ENCODE measurements at regions of chr17 and their contacts with region 1.

Region 1: DNA sequence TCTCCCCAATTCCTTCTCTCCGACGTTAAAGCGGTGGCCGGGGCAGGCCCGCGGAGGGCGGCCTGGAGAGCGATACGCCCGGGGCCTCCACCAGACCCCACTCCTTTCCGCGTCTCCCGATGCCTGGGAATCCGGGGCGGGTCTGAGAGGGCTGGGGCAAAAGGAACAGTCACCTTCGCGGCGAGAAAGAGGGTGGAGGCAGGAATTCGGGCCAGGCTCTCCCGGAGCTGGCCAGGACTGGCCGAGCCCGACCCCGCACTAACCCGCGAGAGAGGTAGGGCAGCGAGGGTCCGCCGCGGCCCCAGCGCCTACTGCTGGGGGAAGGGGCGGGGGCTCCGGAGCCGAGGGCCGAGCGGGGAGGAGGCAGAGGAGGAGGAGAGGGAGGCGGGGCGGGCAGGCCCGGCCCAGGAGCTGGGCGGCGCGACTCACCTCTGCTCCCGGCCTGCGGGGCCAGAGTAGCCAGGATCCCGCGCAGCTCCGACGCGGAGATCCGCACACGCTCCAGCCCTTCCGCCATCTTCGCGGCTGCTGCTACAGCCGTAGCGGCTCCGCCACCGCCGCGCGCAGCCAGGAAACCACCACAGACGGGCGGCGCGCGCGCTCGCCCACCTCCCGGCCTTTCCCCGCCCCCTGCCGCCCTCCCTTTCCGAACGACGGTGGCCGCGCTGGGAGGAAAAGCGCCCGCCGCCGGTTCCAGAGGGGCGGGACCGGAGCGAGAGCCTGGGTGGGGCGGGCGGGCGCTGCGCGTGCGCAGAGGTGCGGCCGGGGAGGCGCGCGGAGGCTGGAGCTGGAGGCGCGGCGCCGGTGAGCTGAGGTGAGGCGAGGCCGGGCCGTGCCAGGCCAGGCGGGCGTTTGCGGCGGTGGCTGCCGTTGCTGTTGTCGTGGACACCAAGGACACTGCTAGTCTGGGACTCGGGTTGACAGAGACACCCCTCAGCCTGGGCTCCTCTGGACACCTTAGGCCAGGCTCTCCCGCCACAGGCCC is at the starts of genes SMG6 and SRR:
- DNase-seq: peak; percentile 95
- H3K4me3 Mint-ChIP-seq: peak within 1 kb of the TSS; percentile 91
- H3K27ac Mint-ChIP-seq: peak within 1 kb of the TSS; percentile 70
- H3K4me1 Mint-ChIP-seq: peaks cover 45% of the 10 kb centered on the region
- H3K27me3 Mint-ChIP-seq: no peaks in the 10 kb centered on the region
- total RNA-seq, gene SMG6: 18.8 to 20.7 TPM
- total RNA-seq, gene SRR: 8.9 to 10.2 TPM

Region 2: DNA sequence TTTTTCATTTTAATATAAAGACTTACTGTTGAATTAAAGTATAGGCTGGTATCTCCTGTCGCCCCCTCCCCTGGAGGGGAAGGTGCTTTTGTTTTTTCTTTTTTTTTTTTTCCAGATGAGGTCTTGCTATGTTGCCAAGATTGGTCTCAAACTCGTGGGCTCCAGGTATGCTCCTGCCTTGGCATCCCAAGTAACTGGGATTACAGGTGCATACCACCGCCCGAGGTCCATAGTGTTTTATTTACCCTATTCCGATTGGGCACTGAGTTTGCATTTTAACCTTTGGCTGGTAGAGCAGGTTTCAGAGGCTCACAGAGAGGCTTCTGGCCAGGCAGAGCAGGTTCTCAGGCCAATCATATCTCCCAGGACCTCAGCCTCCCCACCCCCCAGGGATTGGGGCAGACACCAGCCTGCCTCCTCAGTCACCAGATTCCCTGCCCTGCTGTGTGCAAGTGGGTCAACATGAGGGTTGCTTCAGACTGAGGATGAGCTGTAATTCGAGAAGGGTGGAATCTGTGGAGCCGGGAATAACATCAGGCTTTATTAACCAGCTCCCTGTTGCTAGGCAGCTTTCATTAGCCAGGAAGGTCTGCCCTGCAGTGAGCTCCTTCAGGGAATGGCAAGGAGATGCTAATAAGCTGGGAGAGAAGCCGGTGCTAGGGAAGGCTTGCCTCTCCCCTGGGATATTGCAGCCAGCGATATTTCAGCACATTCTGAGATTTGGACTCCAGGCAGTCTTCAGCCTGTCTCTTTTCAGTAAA is 44.2 kb after region 1 on chr17:
- CTCF ChIA-PET with region 1: no interaction called
- intact Hi-C with region 1: loop called (anchors 5 kb)
- DNase-seq: no peak
- H3K4me3 Mint-ChIP-seq: no peak overlapping the region
- H3K27ac Mint-ChIP-seq: no peak overlapping the region
- H3K4me1 Mint-ChIP-seq: peaks cover 6% of the 10 kb centered on the region
- H3K27me3 Mint-ChIP-seq: no peaks in the 10 kb centered on the region

Measured in activated naive CD4-positive, alpha-beta T cell treated with anti-CD3 and anti-CD28 coated beads for 36 hours (primary cell).